ENCODE measurements at regions of chr1 and their contacts with region 1.

Region 1: DNA sequence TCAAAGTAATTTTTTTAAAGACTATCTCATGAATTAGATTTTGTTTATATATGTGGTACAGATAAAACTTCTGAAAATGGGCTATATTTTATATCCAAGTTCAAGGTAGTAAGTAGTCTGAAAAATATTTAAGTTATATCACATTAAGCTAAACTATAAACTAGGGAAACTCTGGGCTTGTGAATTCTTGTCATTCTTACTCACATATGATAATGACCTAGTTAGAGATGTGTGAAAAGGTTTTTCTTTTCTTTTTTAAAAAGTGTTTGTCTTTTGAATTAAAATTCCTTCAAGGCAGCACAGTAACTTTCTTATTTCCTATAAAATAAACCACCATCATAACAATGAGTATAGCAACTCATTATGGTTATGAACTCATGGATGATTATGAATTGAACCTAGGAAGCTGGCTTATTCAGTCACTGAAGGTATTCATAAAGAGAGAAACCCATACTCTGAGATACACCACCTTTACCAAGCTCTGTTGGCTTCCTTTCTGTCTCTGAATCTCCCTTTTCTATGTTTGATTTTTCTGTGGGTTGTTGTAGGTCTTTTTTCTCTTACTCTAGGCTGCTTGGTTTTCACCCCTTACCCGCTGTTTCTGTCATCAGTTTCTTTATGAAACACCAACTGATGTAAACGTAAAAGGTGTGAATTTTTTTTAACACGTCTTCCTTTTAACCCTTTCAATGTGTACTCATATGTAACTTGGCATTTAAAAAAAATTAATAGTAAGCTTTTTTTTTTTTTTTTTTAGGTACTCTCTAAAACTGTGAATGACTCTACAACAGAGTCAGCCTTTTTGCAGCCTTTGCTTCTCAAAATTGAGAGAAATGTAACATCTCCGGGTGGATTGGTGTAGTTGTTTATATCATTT is 25.2 kb downstream of the IL12RB2 start:
- DNase-seq: peak; percentile 62
- ATAC-seq: peak; percentile 86
- H3K4me3 Mint-ChIP-seq: peak overlapping the region; percentile 44
- H3K27ac Mint-ChIP-seq: peak overlapping the region; percentile 87
- H3K4me1 Mint-ChIP-seq: peaks cover 79% of the 10 kb centered on the region
- H3K27me3 Mint-ChIP-seq: no peaks in the 10 kb centered on the region

Region 2: DNA sequence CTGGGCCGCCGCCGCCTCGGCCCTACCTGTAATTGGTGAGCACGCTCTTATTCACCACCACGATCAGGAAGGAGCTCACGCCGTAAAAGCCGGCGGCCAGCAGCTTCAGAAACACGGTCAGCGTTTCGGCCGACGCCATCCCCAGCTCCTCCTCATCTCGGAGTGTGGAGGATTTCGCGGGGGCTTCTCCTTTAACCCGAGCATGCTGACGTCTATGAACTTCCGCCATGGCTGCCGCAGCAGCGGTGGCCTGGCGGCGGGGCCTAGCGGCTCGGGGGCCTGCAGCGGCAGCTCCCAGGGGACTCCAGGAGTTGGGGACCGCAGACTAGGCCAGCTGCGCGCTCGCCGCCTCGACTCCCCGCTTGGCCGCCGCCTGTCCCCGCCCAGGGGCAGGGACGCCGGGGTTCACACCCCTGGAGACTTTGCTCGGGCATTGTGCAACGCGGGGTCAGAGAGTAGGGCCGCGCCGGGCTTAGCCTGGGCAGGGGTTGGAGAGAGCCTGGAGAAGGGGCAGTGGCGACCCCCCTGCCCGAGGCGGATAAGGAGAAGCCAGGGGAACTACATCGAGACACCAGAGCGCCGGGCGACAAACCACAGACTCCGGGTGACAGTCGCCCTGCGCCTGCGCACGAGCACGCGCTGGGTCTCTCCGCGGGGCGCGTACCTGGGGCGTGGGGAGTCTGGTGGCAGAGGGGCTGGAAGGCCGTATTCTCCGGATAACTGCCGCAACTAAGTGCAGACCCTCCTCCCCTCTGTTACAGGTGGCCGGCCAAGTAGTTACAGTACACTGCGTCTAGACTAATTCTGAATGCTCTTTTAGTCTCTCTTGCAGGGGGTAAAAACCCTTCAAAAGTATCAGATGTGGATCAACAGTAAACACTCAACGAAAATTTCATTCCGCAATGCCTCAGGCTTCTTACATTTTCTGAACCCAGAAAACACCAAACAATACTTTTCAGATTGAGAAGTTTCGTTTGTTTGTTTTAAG is 278.8 kb before region 1 on chr1 and contains the start of gene SLC35D1:
- CTCF ChIA-PET with region 1: no interaction called
- POLR2A ChIA-PET with region 1: no interaction called
- intact Hi-C with region 1: no loop called
- DNase-seq: peak; percentile 77
- ATAC-seq: peak; percentile 79
- H3K4me3 Mint-ChIP-seq: peak within 1 kb of the TSS; percentile 79
- H3K27ac Mint-ChIP-seq: peak within 1 kb of the TSS; percentile 91
- H3K4me1 Mint-ChIP-seq: peaks cover 26% of the 10 kb centered on the region
- H3K27me3 Mint-ChIP-seq: peaks cover 5% of the 10 kb centered on the region
- total RNA-seq, gene SLC35D1: 8.7 to 10.3 TPM

Region 3: GRCh38 chr1:67162957-67163356 is 169.9 kb before region 1 on chr1:
- CTCF ChIA-PET with region 1: interaction called, 3 read pairs
- POLR2A ChIA-PET with region 1: interaction called, 5 read pairs
- intact Hi-C with region 1: loop called in 1 of 2 experiments (anchors 1 kb)
- DNase-seq: peak; percentile 71
- ATAC-seq: peak; percentile 73
- H3K4me3 Mint-ChIP-seq: peak overlapping the region; percentile 59
- H3K27ac Mint-ChIP-seq: peak overlapping the region; percentile 90
- H3K4me1 Mint-ChIP-seq: peaks cover 66% of the 10 kb centered on the region
- H3K27me3 Mint-ChIP-seq: peaks cover 1% of the 10 kb centered on the region

Region 4: GRCh38 chr1:67194209-67194863 is 138.6 kb before region 1 on chr1:
- CTCF ChIA-PET with region 1: interaction called, 5 read pairs
- POLR2A ChIA-PET with region 1: interaction called, 3 read pairs
- intact Hi-C with region 1: loop called (anchors 1 kb)
- DNase-seq: no peak
- ATAC-seq: peak; percentile 24
- H3K4me3 Mint-ChIP-seq: no peak overlapping the region
- H3K27ac Mint-ChIP-seq: peak overlapping the region; percentile 60
- H3K4me1 Mint-ChIP-seq: peaks cover 21% of the 10 kb centered on the region
- H3K27me3 Mint-ChIP-seq: no peaks in the 10 kb centered on the region

Region 5: GRCh38 chr1:67307251-67308060 is 25.4 kb before region 1 on chr1 and contains the start of gene IL12RB2:
- CTCF ChIA-PET with region 1: interaction called, 6 read pairs
- POLR2A ChIA-PET with region 1: interaction called, 7 read pairs
- intact Hi-C with region 1: loop called (anchors 1 kb)
- DNase-seq: peak; percentile 77
- ATAC-seq: peak; percentile 77
- H3K4me3 Mint-ChIP-seq: peak within 1 kb of the TSS; percentile 83
- H3K27ac Mint-ChIP-seq: peak within 1 kb of the TSS; percentile 90
- H3K4me1 Mint-ChIP-seq: peaks cover 48% of the 10 kb centered on the region
- H3K27me3 Mint-ChIP-seq: no peaks in the 10 kb centered on the region
- total RNA-seq, gene IL12RB2: 77.9 to 99.2 TPM

Region 6: DNA sequence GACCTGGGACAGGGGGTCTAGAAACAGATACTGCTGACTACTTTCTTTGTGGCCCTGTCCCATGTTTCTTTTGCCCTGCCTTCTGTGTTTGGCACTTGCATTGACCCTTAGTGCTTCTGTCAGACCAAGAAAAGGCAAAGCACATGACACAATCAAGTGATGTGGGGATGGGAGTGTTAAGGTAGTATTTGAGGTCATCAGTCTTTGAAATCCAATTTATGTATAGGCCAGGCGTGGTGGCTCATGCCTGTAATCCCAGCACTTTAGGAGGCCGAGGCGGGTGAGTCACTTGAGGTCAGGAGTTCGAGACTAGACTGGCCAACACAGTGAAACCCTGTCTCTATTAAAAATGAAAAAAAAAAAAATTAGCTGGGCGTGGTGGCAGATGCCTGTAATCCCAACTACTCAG is 71.3 kb after region 1 on chr1:
- CTCF ChIA-PET with region 1: no interaction called
- POLR2A ChIA-PET with region 1: no interaction called
- intact Hi-C with region 1: loop called (anchors 1 to 5 kb)
- DNase-seq: no peak
- ATAC-seq: no peak
- H3K4me3 Mint-ChIP-seq: no peak overlapping the region
- H3K27ac Mint-ChIP-seq: no peak overlapping the region
- H3K4me1 Mint-ChIP-seq: peaks cover 19% of the 10 kb centered on the region
- H3K27me3 Mint-ChIP-seq: no peaks in the 10 kb centered on the region